A549 (cell line): ENCODE measurements at regions of chr12 and their contacts with region 1.

Region 1: GRCh38 chr12:52769354-52769753 is 7.8 kb downstream of the KRT76 start:
- DNase-seq: no peak
- ATAC-seq: no peak
- H3K4me3 ChIP-seq: no peak overlapping the region
- H3K27ac ChIP-seq: no peak overlapping the region
- H3K4me1 ChIP-seq: no peaks in the 10 kb centered on the region
- CTCF ChIP-seq: no peak
- EP300 ChIP-seq: no peak
- POLR2A ChIP-seq: no peak
- RAD21 ChIP-seq: no peak

Region 2: GRCh38 chr12:52779914-52780313 is 10.6 kb after region 1 on chr12:
- CTCF ChIA-PET with region 1: interaction called, 13 read pairs
- POLR2A ChIA-PET with region 1: no interaction called
- DNase-seq: no peak
- ATAC-seq: no peak
- H3K4me3 ChIP-seq: no peak overlapping the region
- H3K27ac ChIP-seq: no peak overlapping the region
- H3K4me1 ChIP-seq: no peaks in the 10 kb centered on the region
- CTCF ChIP-seq: no peak
- EP300 ChIP-seq: no peak
- POLR2A ChIP-seq: no peak
- RAD21 ChIP-seq: no peak

Region 3: DNA sequence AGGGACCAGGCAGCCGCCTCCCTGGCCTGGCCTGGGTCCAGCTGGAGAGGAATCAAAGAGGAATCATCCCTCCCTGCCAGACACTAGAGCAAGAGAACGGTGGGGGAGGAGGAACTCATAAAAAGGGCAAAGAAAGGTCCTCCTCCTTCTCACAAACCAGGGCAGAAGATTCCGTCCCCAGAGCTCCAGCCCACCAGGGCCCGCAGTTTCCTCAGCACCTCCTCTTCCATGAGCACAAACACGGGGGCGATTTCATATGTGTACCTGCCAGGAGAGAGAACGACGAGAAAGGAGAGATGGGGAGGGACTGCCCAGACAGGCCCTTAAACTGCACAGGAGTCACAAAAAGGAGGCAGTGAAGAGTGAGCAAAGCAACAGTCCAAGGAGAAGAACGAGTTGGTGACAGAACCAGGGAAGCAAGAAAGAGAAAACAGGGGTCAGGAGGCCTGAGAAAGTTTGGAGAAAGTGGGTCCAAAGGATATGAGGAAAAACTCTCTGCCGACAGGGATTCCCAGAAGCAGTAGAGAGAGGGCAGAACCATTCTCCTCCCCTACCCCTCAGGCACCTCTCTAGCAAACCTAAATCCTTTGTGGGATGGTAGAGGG is 402.5 kb after region 1 on chr12:
- CTCF ChIA-PET with region 1: no interaction called
- POLR2A ChIA-PET with region 1: no interaction called
- DNase-seq: peak in 1 of 2 experiments; percentile 47
- ATAC-seq: no peak
- H3K4me3 ChIP-seq: no peak overlapping the region
- H3K27ac ChIP-seq: peak overlapping the region; percentile 79
- H3K4me1 ChIP-seq: peaks cover 63% of the 10 kb centered on the region
- CTCF ChIP-seq: no peak
- EP300 ChIP-seq: no peak
- POLR2A ChIP-seq: no peak
- RAD21 ChIP-seq: no peak